CD4-positive, alpha-beta T cell (primary cell): ENCODE measurements at regions of chr1 and their contacts with region 1.

Region 1: DNA sequence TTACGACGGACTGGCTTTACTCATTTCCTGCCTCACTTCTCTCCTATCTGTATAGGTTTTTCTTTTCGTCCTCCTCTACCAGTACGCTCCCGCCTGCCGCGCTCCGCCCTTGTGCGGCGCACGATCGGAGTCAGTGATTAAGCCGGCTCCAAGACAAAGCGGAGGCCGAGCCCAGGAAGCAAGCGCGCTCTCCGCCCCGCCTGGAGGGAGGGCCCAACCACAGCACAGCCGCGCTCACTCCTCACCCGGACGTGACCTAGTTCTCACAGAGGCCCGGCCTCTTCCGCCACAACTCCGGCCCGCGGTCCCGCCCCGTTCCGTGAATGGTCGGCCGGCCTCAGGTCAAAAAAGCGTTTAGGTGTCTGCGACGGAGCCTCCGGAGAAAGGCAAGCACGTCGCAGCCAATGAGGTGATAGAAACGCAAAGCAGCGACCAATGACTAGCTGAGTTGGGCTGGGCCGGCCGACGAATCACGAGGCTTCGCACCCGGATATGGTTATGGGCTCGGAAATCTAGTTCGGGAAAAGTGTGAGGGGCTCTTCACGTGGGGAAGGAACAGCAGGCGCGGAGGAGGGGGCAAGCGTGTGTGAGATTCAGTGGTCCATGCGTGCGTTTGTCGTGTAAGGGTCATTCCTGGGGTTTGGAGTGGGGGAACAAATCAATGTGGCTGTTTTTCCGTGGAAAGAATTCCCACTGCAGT is at the start of gene METTL13:
- DNase-seq: peak; percentile 95 to 100 (median 98)
- ATAC-seq: peak; percentile 91
- H3K4me3 ChIP-seq: peak within 1 kb of the TSS; percentile 78
- H3K4me3 Mint-ChIP-seq: peak within 1 kb of the TSS; percentile 99
- H3K27ac ChIP-seq: peak within 1 kb of the TSS; percentile 63 to 75
- H3K27ac Mint-ChIP-seq: peak within 1 kb of the TSS; percentile 90
- H3K4me1 ChIP-seq: peaks cover 46% of the 10 kb centered on the region
- H3K4me1 Mint-ChIP-seq: peaks cover 47% of the 10 kb centered on the region
- H3K27me3 ChIP-seq: no peaks in the 10 kb centered on the region
- H3K27me3 Mint-ChIP-seq: no peaks in the 10 kb centered on the region
- CTCF ChIP-seq: no peak
- total RNA-seq, gene METTL13: 6.5 to 7.9 TPM

Region 2: GRCh38 chr1:171748651-171749050 is 32.7 kb before region 1 on chr1:
- CTCF ChIA-PET with region 1: interaction called, 18 read pairs
- POLR2A ChIA-PET with region 1: interaction called, 122 read pairs
- intact Hi-C with region 1: loop called in 1 of 2 experiments (anchors 2 kb)
- DNase-seq: no peak
- ATAC-seq: no peak
- H3K4me3 ChIP-seq: no peak overlapping the region
- H3K4me3 Mint-ChIP-seq: no peak overlapping the region
- H3K27ac ChIP-seq: no peak overlapping the region
- H3K27ac Mint-ChIP-seq: no peak overlapping the region
- H3K4me1 ChIP-seq: peaks cover 2% of the 10 kb centered on the region
- H3K4me1 Mint-ChIP-seq: peaks cover 7% of the 10 kb centered on the region
- H3K27me3 ChIP-seq: no peaks in the 10 kb centered on the region
- H3K27me3 Mint-ChIP-seq: no peaks in the 10 kb centered on the region
- CTCF ChIP-seq: no peak